B cell (primary cell): ENCODE measurements at regions of chr15 and their contacts with region 1.

Region 1: DNA sequence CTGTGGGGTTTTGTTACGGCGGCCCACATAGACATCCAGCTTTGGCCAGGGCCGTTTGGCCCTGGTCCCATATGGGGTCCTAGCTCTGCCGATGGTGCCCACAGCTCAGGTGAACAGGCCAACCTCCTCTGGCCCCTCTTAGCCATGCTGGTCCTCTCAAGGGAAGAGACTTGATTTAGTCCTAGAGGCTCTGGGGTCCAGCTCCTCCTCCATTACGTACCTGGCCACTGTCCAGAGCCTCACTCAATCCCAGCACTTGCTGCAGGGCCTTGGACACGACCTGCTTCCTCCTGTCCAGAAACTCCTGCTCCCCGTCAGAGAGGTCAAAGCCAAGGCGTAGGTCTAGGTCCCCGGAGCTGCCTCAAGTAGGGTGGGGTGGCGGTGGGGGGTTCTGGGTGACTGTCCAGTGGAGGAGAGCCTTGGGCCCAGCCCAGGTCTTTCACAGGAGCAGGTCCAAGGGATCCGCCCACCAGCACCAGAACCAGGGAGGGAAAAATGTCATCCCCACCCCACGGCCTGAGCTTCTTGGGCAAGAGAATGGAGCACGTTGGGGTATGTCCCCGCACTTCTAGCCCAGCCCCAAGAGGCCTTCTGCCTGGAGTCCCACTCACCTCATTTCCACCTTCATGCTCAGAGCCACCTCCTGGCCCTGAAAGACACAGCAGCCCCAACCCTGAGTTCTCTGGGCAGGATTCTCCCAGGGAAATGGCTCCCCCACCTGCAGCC is 6.8 kb downstream of the PLA2G4F start:
- DNase-seq: no peak
- ATAC-seq: no peak
- H3K4me3 ChIP-seq: no peak overlapping the region
- H3K4me3 Mint-ChIP-seq: no peak overlapping the region
- H3K27ac ChIP-seq: no peak overlapping the region
- H3K27ac Mint-ChIP-seq: no peak overlapping the region
- H3K4me1 ChIP-seq: no peaks in the 10 kb centered on the region
- H3K4me1 Mint-ChIP-seq: no peaks in the 10 kb centered on the region
- H3K27me3 ChIP-seq: peaks cover 0 to 4% (median 0%) of the 10 kb centered on the region in 4 experiments
- H3K27me3 Mint-ChIP-seq: peaks cover 4% of the 10 kb centered on the region
- CTCF ChIP-seq: no peak

Region 2: GRCh38 chr15:40763801-40764732 is 1385.6 kb before region 1 on chr15 and contains the start of gene GCHFR:
- CTCF ChIA-PET with region 1: no interaction called
- POLR2A ChIA-PET with region 1: interaction called, 12 read pairs
- intact Hi-C with region 1: no loop called
- DNase-seq: peak; percentile 76
- ATAC-seq: peak; percentile 74
- H3K4me3 ChIP-seq: peak within 1 kb of the TSS; percentile 51 to 87 (median 78)
- H3K4me3 Mint-ChIP-seq: peak within 1 kb of the TSS; percentile 89
- H3K27ac ChIP-seq: peak within 1 kb of the TSS; percentile 24 to 35
- H3K27ac Mint-ChIP-seq: peak within 1 kb of the TSS; percentile 68
- H3K4me1 ChIP-seq: peaks cover 29 to 43% of the 10 kb centered on the region in 2 donors
- H3K4me1 Mint-ChIP-seq: peaks cover 33% of the 10 kb centered on the region
- H3K27me3 ChIP-seq: no peaks in the 10 kb centered on the region
- H3K27me3 Mint-ChIP-seq: no peaks in the 10 kb centered on the region
- CTCF ChIP-seq: peak; percentile 41
- total RNA-seq, gene GCHFR: 23.1 and 23.7 TPM in 2 replicates

Region 3: DNA sequence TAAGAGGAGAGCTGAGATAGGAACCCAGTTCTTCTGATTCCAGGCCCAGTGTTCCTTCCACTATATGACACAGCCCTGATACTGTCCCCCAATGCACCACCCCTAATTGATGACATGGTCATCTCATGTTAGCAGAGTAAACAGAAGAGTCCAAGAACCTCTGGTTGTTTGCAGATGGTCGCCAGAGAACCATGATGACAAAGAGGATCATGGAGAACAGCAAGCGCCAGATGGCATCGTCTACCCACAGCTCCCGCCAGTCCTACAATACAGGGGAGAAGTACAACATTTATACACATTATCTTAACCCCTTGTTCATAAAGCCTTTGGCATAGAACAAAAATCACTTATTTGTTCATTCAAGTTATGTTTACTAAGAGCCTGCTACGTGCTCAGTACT is 77.0 kb after region 1 on chr15:
- CTCF ChIA-PET with region 1: no interaction called
- POLR2A ChIA-PET with region 1: no interaction called
- intact Hi-C with region 1: no loop called
- DNase-seq: no peak
- ATAC-seq: no peak
- H3K4me3 ChIP-seq: no peak overlapping the region
- H3K4me3 Mint-ChIP-seq: no peak overlapping the region
- H3K27ac ChIP-seq: no peak overlapping the region
- H3K27ac Mint-ChIP-seq: no peak overlapping the region
- H3K4me1 ChIP-seq: no peaks in the 10 kb centered on the region
- H3K4me1 Mint-ChIP-seq: no peaks in the 10 kb centered on the region
- H3K27me3 ChIP-seq: no peaks in the 10 kb centered on the region
- H3K27me3 Mint-ChIP-seq: no peaks in the 10 kb centered on the region
- CTCF ChIP-seq: no peak